ENCODE measurements at regions of chr3 and their contacts with region 1.

Region 1: GRCh38 chr3:184727357-184728009 is 15.6 kb upstream of the MAGEF1 start:
- DNase-seq: no peak
- H3K4me3 ChIP-seq: no peak overlapping the region
- CTCF ChIP-seq: peak; percentile 77

Region 2: DNA sequence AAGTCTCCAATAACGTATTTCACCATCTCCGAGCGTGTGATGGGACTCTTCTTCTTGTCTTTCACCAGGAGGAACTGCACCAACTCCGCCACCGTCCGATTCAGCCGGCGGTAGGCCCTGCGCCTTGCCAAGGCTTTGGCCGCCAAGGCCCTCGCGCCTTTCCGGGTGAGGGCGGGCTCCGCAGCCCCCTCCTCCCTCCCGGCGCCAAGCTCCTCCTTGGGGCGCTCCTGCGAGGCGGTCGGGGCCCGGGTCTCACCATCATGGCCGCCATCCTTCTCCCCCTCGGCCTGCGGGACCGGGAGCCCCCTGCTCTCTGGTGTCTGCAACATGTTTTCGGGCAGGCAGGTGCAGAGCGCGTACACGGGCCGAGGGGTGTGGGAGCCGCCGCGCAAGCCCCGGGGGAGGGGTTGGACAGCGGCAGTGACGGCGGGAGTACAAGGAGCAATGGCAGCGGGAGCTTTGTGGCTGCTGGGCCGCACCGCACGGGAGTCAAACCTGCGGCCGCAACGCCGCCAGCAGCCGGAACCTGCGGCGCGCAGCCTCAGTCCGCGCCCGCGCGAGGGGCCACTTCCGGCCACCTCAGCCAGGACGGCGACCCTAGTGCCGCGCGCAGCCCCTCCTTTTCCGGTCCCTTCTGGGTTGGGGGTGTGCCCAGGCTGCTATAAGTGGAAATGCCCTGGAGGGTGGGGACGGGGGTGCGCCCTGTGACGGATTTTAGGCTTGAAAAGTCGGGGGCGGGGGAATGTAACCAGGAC is 15.8 kb before region 1 on chr3 and contains the start of gene MAGEF1:
- CTCF ChIA-PET with region 1: interaction called, 32 read pairs
- POLR2A ChIA-PET with region 1: no interaction called
- DNase-seq: peak; percentile 51
- H3K4me3 ChIP-seq: peak within 1 kb of the TSS; percentile 84
- CTCF ChIP-seq: no peak

Region 3: DNA sequence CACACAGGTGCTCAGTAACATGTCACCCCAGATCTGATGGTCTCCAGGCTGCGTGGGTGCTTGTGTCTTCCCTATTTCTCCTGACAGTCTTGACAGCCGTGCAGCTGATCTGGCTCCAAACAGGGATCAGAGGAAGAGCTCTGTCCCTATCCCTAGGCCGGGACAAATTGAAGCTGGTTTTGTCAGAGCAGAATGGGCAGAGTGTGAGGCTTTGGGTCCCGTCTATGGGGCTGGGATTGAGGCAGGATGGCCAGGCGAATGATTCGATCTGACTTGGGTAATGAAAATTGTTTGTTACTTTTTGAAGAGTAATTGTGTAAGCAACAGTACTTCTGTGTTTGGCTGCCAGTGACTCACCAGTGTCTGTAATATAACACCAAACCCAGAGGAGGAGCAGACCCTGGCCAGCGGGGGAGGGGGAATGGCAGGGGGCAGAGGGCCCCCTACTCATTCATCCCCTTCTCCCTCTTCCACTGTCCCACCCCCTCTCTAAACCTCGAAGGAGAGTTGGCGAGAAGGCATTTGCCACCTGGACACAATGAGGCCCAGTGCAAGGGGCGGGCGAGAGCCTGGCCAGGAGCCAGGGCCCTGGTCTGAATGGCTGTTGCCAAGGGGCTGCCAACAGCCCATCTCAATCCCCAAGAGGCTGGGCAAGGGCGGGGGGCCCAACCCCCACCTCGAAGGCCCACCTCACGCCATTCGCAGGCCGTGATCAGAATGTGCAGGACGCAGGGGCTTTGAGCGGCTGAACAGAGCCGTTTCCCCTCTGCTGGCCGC is 10.7 kb before region 1 on chr3:
- CTCF ChIA-PET with region 1: interaction called, 32 read pairs
- POLR2A ChIA-PET with region 1: no interaction called
- DNase-seq: no peak
- H3K4me3 ChIP-seq: no peak overlapping the region; the same call in 1 of the 2 replicates
- CTCF ChIP-seq: no peak

Region 4: DNA sequence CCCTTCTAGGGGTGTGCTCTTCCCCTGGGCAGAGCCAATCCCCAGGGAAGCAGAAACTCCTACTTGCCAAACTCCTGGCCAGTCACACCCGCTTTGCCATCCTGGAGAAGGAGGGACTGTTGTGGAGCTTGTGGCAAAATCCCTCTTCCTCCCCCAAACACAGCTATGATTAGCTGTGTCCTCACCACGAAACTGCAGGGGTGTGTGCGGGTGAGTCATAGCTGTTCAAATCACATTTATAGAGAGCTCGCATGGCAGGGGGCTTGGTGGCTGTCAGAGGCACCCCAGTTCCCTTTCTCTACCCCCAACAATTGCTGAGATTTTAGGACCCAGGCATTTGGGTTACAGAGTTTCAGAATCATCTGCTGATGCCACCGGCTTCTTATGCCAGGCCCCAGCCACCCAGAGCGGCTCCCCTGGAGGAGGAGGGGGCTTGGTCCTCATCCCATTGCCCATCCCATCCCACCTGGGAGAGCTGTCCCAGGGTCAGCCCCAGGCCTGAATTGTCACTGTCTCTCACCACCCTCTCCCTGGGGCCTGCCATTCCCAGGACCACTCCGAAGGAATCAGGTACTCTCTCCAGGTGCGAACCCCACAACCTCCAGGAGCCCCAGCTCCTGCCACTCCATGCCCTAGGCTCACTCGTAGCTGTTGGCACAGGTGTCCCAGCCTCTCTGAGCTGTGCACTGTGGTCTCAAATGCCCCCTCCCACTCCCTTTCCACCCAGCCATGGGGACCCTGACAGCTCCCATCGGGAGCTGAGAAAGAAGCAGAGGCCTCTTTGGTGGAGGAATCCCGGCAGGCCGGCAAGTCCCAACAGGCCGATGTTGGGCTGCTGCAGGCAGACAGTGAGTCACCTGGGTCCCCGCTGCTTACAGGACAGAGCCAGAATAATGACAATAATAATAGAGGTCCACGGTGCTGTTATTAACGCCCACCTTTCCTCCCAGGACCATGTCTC is 13.3 kb after region 1 on chr3:
- CTCF ChIA-PET with region 1: interaction called, 77 read pairs
- POLR2A ChIA-PET with region 1: no interaction called
- DNase-seq: no peak
- H3K4me3 ChIP-seq: no peak overlapping the region
- CTCF ChIP-seq: no peak

Region 5: GRCh38 chr3:184757022-184757651 is 29.7 kb after region 1 on chr3:
- CTCF ChIA-PET with region 1: interaction called, 16 read pairs
- POLR2A ChIA-PET with region 1: no interaction called
- DNase-seq: peak; percentile 92
- H3K4me3 ChIP-seq: peak overlapping the region; percentile 38
- CTCF ChIP-seq: no peak

Measured in AG04449 (cell line).